B cell (primary cell): ENCODE measurements at regions of chr19 and their contacts with region 1.

Region 1: GRCh38 chr19:44002566-44003460 is at the start of gene ZNF230:
- DNase-seq: peak; percentile 92
- ATAC-seq: peak; percentile 95
- H3K4me3 ChIP-seq: peak within 1 kb of the TSS; percentile 75 to 96 (median 89)
- H3K4me3 Mint-ChIP-seq: peak within 1 kb of the TSS; percentile 99
- H3K27ac ChIP-seq: peak within 1 kb of the TSS; percentile 67 to 78
- H3K27ac Mint-ChIP-seq: peak within 1 kb of the TSS; percentile 95
- H3K4me1 ChIP-seq: peaks cover 13 to 14% of the 10 kb centered on the region in 2 donors
- H3K4me1 Mint-ChIP-seq: peaks cover 19% of the 10 kb centered on the region
- H3K27me3 ChIP-seq: no peaks in the 10 kb centered on the region
- H3K27me3 Mint-ChIP-seq: no peaks in the 10 kb centered on the region
- CTCF ChIP-seq: no peak
- total RNA-seq, gene ZNF230: 16.8 TPM in 2 replicates

Region 2: GRCh38 chr19:43826787-43827754 is 175.7 kb before region 1 on chr19 and contains the start of gene ZNF283:
- CTCF ChIA-PET with region 1: no interaction called
- POLR2A ChIA-PET with region 1: no interaction called
- intact Hi-C with region 1: loop called (anchors 1 kb)
- DNase-seq: peak; percentile 86
- ATAC-seq: peak; percentile 99
- H3K4me3 ChIP-seq: peak within 1 kb of the TSS; percentile 56 to 88 (median 69)
- H3K4me3 Mint-ChIP-seq: peak within 1 kb of the TSS; percentile 92
- H3K27ac ChIP-seq: peak within 1 kb of the TSS in 1 of 2 donors; percentile 23
- H3K27ac Mint-ChIP-seq: peak within 1 kb of the TSS; percentile 50
- H3K4me1 ChIP-seq: peaks cover 9 to 12% of the 10 kb centered on the region in 2 donors
- H3K4me1 Mint-ChIP-seq: peaks cover 17% of the 10 kb centered on the region
- H3K27me3 ChIP-seq: peaks cover 0 to under 1% (median 0%) of the 10 kb centered on the region in 4 experiments
- H3K27me3 Mint-ChIP-seq: peaks cover 11% of the 10 kb centered on the region
- CTCF ChIP-seq: no peak
- total RNA-seq, gene ZNF283: 20.8 and 23.3 TPM in 2 replicates

Region 3: DNA sequence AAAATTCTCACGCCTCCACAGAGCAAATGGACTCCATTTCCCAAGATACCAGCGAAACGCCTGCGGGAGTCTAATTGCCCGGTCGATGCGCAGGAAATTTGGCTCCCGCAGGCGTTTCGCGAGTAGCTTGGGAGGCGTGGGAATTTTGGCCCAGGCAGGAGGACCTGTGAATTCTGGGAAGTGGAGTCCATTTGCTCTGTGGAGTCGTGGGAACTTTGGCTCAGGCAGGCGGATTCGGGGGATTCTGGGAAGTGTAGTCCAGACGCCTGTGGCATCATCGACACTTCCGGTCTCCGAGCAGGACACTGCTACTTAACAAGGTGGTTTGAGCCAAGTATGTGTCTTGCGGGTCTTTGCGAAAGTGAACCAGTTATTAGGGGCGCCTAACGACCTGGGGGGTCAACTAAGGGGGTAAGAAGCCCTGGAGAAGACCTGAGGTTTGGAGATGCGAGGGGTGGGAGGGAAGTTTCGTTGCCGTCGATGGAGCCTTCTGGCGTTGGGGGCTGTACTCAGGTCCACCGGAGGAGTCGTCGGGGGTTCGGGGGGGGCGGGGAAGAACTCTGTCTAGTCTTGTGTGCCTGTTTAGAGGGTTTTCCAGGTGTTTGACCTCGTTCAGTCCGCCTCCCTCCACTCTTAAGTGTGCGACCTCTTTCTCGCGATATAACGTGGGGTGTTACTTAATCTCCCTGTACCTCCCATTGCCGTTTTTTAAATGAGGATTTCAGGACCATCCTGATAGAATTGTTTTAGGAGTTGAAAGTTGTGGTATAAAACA is 18.7 kb before region 1 on chr19 and contains the start of gene ZNF155:
- CTCF ChIA-PET with region 1: no interaction called
- POLR2A ChIA-PET with region 1: no interaction called
- intact Hi-C with region 1: loop called (anchors 1 kb)
- DNase-seq: peak; percentile 84
- ATAC-seq: peak; percentile 92
- H3K4me3 ChIP-seq: peak within 1 kb of the TSS; percentile 79 to 93 (median 85)
- H3K4me3 Mint-ChIP-seq: peak within 1 kb of the TSS; percentile 95
- H3K27ac ChIP-seq: peak within 1 kb of the TSS; percentile 61 to 79
- H3K27ac Mint-ChIP-seq: peak within 1 kb of the TSS; percentile 80
- H3K4me1 ChIP-seq: peaks cover 3 to 14% of the 10 kb centered on the region in 2 donors
- H3K4me1 Mint-ChIP-seq: peaks cover 12% of the 10 kb centered on the region
- H3K27me3 ChIP-seq: no peaks in the 10 kb centered on the region
- H3K27me3 Mint-ChIP-seq: no peaks in the 10 kb centered on the region
- CTCF ChIP-seq: no peak
- total RNA-seq, gene ZNF155: 8.4 and 8.9 TPM in 2 replicates

Region 4: GRCh38 chr19:44093931-44094765 is 91.3 kb after region 1 on chr19 and contains the start of gene ZNF224:
- CTCF ChIA-PET with region 1: interaction called, 5 read pairs
- POLR2A ChIA-PET with region 1: no interaction called
- intact Hi-C with region 1: loop called (anchors 1 kb)
- DNase-seq: peak; percentile 87
- ATAC-seq: peak; percentile 94
- H3K4me3 ChIP-seq: peak within 1 kb of the TSS; percentile 67 to 95 (median 89)
- H3K4me3 Mint-ChIP-seq: peak within 1 kb of the TSS; percentile 96
- H3K27ac ChIP-seq: peak within 1 kb of the TSS; percentile 39 to 70
- H3K27ac Mint-ChIP-seq: peak within 1 kb of the TSS; percentile 90
- H3K4me1 ChIP-seq: peaks cover 4 to 9% of the 10 kb centered on the region in 2 donors
- H3K4me1 Mint-ChIP-seq: peaks cover 22% of the 10 kb centered on the region
- H3K27me3 ChIP-seq: no peaks in the 10 kb centered on the region
- H3K27me3 Mint-ChIP-seq: no peaks in the 10 kb centered on the region
- CTCF ChIP-seq: no peak
- total RNA-seq, gene ZNF224: 94.2 and 96.1 TPM in 2 replicates

Region 5: GRCh38 chr19:44207126-44207803 is 204.5 kb after region 1 on chr19:
- CTCF ChIA-PET with region 1: no interaction called
- POLR2A ChIA-PET with region 1: no interaction called
- intact Hi-C with region 1: loop called (anchors 1 kb)
- DNase-seq: peak; percentile 91
- ATAC-seq: peak; percentile 91
- H3K4me3 ChIP-seq: peak overlapping the region; percentile 70 to 93 (median 88)
- H3K4me3 Mint-ChIP-seq: peak overlapping the region; percentile 88
- H3K27ac ChIP-seq: peak overlapping the region; percentile 71 to 86
- H3K27ac Mint-ChIP-seq: peak overlapping the region; percentile 92
- H3K4me1 ChIP-seq: peaks cover 4 to 7% of the 10 kb centered on the region in 2 donors
- H3K4me1 Mint-ChIP-seq: peaks cover 11% of the 10 kb centered on the region
- H3K27me3 ChIP-seq: no peaks in the 10 kb centered on the region
- H3K27me3 Mint-ChIP-seq: peaks cover 13% of the 10 kb centered on the region
- CTCF ChIP-seq: no peak

Region 6: GRCh38 chr19:44500148-44500956 is 497.5 kb after region 1 on chr19 and contains the start of gene ZNF180:
- CTCF ChIA-PET with region 1: no interaction called
- POLR2A ChIA-PET with region 1: no interaction called
- intact Hi-C with region 1: loop called (anchors 1 kb)
- DNase-seq: peak; percentile 98
- ATAC-seq: peak; percentile 93
- H3K4me3 ChIP-seq: peak within 1 kb of the TSS; percentile 70 to 99 (median 93)
- H3K4me3 Mint-ChIP-seq: peak within 1 kb of the TSS; percentile 99
- H3K27ac ChIP-seq: peak within 1 kb of the TSS; percentile 52 to 84
- H3K27ac Mint-ChIP-seq: peak within 1 kb of the TSS; percentile 92
- H3K4me1 ChIP-seq: peaks cover 13 to 25% of the 10 kb centered on the region in 2 donors
- H3K4me1 Mint-ChIP-seq: peaks cover 29% of the 10 kb centered on the region
- H3K27me3 ChIP-seq: peaks cover 0 to 5% (median 2%) of the 10 kb centered on the region in 4 experiments
- H3K27me3 Mint-ChIP-seq: peaks cover 14% of the 10 kb centered on the region
- CTCF ChIP-seq: peak; percentile 56
- total RNA-seq, gene ZNF180: 16.1 and 19.6 TPM in 2 replicates